Aorta (tissue), 5 donors: ENCODE measurements at regions of chr10 and their contacts with region 1.

Region 1: DNA sequence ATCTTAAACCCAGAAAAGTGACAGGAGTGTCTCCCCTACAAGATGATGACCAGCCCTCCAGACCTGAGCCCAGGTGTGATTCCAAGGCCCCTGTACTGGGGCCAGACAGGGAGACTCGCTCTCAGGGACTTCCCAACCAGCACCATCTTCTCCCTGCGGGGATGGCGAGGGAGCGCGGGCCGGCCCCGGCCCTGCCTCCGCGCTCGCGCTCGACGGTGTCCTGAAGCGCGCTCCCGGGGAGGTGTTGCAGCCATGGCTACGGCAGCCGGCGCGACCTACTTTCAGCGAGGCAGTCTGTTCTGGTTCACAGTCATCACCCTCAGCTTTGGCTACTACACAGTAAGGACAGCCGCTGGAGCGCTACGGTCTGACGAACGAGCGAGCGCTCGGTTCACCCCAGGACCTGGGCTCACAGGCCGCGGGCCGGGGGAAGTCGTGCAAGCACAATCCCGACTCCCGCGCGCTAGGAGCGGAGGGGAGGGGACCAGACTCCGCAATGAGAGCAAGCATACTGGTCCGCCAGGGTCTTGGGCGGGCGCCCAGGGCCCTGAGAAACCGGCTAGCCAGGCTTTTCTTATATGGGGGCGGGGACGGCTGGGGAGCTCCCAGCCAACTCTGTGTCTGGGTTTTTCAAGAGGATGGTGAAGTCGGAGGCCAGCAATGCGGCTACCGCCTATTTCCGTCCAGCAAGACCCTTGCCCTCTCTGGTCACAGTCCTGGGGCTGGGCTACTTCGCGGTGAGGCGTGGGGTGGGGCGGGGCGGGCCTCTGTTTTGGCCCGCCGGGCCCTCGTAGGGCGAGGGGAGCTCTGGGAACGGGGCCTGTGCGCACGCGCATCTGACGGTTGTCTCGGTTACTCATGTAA is at the start of gene TMEM254:
- DNase-seq: peak; percentile 96 to 98
- ATAC-seq: peak; percentile 97
- H3K4me3 ChIP-seq: peak within 1 kb of the TSS; percentile 63 to 78
- H3K27ac ChIP-seq: peak within 1 kb of the TSS; percentile 15 to 90
- H3K4me1 ChIP-seq: no peaks in the 10 kb centered on the region
- H3K27me3 ChIP-seq: no peaks in the 10 kb centered on the region
- total RNA-seq, gene TMEM254: 7.6 to 8.1 TPM

Region 2: DNA sequence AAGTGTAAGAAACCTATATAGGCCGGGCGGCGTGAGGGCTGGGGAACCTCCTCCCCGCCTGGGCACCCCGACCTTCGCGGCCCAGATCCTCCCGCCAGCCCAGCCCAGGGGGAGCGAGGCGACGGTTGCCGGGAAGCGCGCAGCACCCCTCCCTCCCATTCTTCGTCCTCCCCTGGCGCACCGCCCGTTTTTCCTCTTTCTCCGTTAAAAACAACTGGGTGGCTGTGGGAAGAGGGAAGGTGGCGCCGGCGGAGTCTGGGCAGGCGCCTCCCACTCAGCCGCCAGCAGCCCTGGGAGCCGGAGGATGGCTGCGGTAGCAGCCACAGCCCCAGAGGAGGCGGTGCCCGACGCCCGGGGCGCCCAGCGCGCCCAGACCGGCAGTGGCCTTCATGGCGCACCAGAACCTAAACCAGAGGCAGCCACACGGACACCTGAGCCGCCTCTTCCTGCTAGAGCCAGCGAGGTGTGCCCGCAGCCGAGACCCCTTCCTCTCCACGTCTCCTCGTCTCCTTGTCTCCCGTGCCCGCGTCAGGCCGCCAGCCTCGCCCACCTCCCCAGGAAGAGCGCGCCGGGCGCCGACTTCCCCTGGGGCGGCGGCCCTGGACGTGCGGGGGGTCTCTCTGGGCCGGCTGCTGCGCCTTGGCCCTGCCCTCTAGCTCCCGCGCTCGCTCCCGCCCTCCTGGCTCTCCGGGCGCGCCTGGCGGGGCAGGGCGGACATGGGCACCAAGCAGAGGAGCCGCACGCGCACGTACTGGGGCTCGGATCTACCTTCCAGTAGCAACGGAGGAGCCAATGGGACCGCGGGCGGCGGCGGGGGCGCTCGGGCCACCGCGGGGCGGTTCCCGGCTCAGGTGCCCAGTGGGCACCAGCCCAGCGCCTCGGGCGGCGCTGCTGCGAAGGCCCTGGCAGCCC is 97.0 kb before region 1 on chr10:
- intact Hi-C with region 1: loop called in 1 of 2 experiments (anchors 5 kb)
- DNase-seq: peak; percentile 66 to 87
- ATAC-seq: peak; percentile 89
- H3K4me3 ChIP-seq: peak overlapping the region; percentile 42 to 53
- H3K27ac ChIP-seq: peak overlapping the region; percentile 11 to 25
- H3K4me1 ChIP-seq: no peaks in the 10 kb centered on the region
- H3K27me3 ChIP-seq: no peaks in the 10 kb centered on the region

Region 3: DNA sequence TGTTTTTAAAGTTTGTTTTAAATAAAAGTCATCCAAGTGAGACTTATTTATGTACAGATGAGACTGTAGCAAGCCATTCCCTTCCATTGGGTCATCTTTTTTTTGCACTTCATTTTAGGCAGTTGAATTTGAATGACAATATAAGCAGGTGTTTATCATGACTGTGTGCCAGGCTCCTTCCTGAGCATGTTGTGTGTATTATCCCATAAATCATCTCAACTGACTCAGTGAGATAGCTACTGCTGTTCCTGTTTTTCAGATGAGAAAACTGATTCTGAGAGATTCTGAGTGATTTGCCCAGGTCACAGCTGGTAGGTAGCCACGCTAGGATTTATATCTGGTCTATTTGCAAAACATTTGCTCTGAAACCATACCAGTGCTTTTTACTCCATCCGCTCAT is 11.4 kb after region 1 on chr10:
- intact Hi-C with region 1: no loop called
- DNase-seq: no peak
- ATAC-seq: no peak
- H3K4me3 ChIP-seq: no peak overlapping the region
- H3K27ac ChIP-seq: no peak overlapping the region
- H3K4me1 ChIP-seq: no peaks in the 10 kb centered on the region
- H3K27me3 ChIP-seq: no peaks in the 10 kb centered on the region

Region 4: GRCh38 chr10:80136081-80136571 is 57.4 kb after region 1 on chr10:
- intact Hi-C with region 1: loop called in 1 of 2 experiments (anchors 10 kb)
- DNase-seq: peak; percentile 94 to 96
- ATAC-seq: peak; percentile 82
- H3K4me3 ChIP-seq: no peak overlapping the region
- H3K27ac ChIP-seq: no peak overlapping the region
- H3K4me1 ChIP-seq: no peaks in the 10 kb centered on the region
- H3K27me3 ChIP-seq: no peaks in the 10 kb centered on the region